ENCODE measurements at regions of chr10 and their contacts with region 1.

Region 1: DNA sequence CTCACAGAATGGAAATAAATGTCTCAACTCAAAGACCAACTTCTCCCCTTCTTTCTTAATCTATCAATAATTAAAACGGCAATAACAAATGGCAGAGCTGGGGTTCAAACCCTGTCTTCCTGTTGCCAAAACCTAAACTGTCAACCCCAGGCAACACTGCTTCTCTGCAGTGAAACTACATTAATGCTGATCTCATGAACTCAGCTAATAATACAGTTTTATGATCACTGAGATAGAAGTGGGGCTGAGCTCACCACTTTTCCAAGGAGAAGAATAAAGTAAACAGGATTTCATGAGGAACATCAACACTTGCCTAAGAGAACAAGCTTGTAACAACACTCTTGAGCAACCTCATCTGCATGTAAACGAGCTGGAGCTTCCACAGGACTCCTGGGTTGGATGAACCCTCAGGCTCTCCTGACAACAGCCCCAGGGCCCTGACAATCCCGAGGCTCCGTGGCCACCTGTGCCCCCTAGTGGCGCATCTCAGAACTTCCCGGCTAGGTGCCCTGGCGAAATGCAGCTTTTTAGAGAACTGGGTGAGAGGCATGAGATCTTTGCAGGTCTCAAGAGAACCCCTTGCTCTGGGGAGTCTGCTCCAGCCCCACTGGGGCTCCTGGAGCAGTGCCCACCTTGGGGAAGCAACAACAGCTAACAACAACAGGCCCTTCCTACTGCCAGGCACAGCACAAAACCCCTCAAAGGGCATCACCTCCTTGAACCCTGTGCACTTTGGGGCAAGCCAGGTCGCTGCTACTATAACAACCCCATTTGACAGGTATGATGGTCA is 169.3 kb downstream of the SH3PXD2A start:
- DNase-seq: peak; percentile 43 to 94 (median 75)
- ATAC-seq: peak; percentile 75 to 95 (median 92)
- H3K4me3 ChIP-seq: no peak overlapping the region
- H3K27ac ChIP-seq: no peak overlapping the region
- H3K4me1 ChIP-seq: no peaks in the 10 kb centered on the region
- H3K27me3 ChIP-seq: no peaks in the 10 kb centered on the region
- CTCF ChIP-seq: peak; percentile 86 to 95 (median 94)

Region 2: GRCh38 chr10:103598654-103599115 is 87.4 kb before region 1 on chr10:
- intact Hi-C with region 1: loop called in 2 of 3 experiments (anchors 5 kb)
- DNase-seq: peak in 2 of 6 donors; percentile 45 to 65
- ATAC-seq: peak; percentile 66 to 85 (median 76)
- H3K4me3 ChIP-seq: no peak overlapping the region
- H3K27ac ChIP-seq: no peak overlapping the region
- H3K4me1 ChIP-seq: no peaks in the 10 kb centered on the region
- H3K27me3 ChIP-seq: no peaks in the 10 kb centered on the region
- CTCF ChIP-seq: peak in 3 of 4 donors; percentile 9 to 39 (median 36)

Region 3: DNA sequence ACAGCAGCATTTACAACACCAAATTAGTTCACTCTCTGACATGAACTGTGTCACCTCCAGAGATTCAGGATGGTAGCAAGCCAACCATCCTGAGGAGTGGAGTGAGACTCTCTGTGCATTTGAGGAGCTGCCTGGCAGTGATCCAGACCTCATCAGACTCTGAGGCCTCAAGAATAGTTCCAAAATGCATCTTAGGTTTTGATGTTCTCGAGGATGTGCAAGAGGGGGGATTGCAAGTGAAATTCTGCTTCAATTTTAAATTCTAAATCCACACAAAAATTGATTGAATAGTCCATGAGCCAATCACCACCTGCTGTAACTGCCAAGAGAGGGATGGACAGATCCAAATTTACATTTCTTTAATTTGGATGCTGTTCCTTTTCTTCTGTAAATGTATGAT is 330.6 kb after region 1 on chr10:
- intact Hi-C with region 1: no loop called
- DNase-seq: no peak
- ATAC-seq: no peak
- H3K4me3 ChIP-seq: no peak overlapping the region
- H3K27ac ChIP-seq: no peak overlapping the region
- H3K4me1 ChIP-seq: no peaks in the 10 kb centered on the region
- H3K27me3 ChIP-seq: no peaks in the 10 kb centered on the region
- CTCF ChIP-seq: no peak